CD8-positive, alpha-beta T cell (primary cell): ENCODE measurements at regions of chr1 and their contacts with region 1.

Region 1: GRCh38 chr1:99707535-99708142 is 58.8 kb downstream of the FRRS1 start:
- DNase-seq: peak in 8 of 9 experiments; percentile 12 to 58 (median 44)
- ATAC-seq: peak; percentile 58
- H3K4me3 ChIP-seq: no peak overlapping the region
- H3K4me3 Mint-ChIP-seq: no peak overlapping the region
- H3K27ac ChIP-seq: no peak overlapping the region
- H3K27ac Mint-ChIP-seq: no peak overlapping the region
- H3K4me1 ChIP-seq: peaks cover 3% of the 10 kb centered on the region
- H3K4me1 Mint-ChIP-seq: peaks cover 9% of the 10 kb centered on the region
- H3K27me3 ChIP-seq: no peaks in the 10 kb centered on the region
- H3K27me3 Mint-ChIP-seq: peaks cover 2% of the 10 kb centered on the region
- CTCF ChIP-seq: peak; percentile 77

Region 2: GRCh38 chr1:98749152-98749756 is 958.4 kb before region 1 on chr1:
- CTCF ChIA-PET with region 1: interaction called, 4 read pairs
- POLR2A ChIA-PET with region 1: no interaction called
- intact Hi-C with region 1: loop called (anchors 5 to 10 kb)
- DNase-seq: peak in 2 of 9 experiments; percentile 18 to 30
- ATAC-seq: no peak
- H3K4me3 ChIP-seq: no peak overlapping the region
- H3K4me3 Mint-ChIP-seq: no peak overlapping the region
- H3K27ac ChIP-seq: no peak overlapping the region
- H3K27ac Mint-ChIP-seq: no peak overlapping the region
- H3K4me1 ChIP-seq: no peaks in the 10 kb centered on the region
- H3K4me1 Mint-ChIP-seq: no peaks in the 10 kb centered on the region
- H3K27me3 ChIP-seq: no peaks in the 10 kb centered on the region
- H3K27me3 Mint-ChIP-seq: no peaks in the 10 kb centered on the region
- CTCF ChIP-seq: peak; percentile 46

Region 3: GRCh38 chr1:99180343-99180808 is 527.3 kb before region 1 on chr1:
- CTCF ChIA-PET with region 1: no interaction called
- POLR2A ChIA-PET with region 1: no interaction called
- intact Hi-C with region 1: loop called (anchors 5 kb)
- DNase-seq: peak; percentile 13 to 71 (median 53)
- ATAC-seq: peak; percentile 61
- H3K4me3 ChIP-seq: no peak overlapping the region
- H3K4me3 Mint-ChIP-seq: no peak overlapping the region
- H3K27ac ChIP-seq: no peak overlapping the region
- H3K27ac Mint-ChIP-seq: no peak overlapping the region
- H3K4me1 ChIP-seq: no peaks in the 10 kb centered on the region
- H3K4me1 Mint-ChIP-seq: no peaks in the 10 kb centered on the region
- H3K27me3 ChIP-seq: no peaks in the 10 kb centered on the region
- H3K27me3 Mint-ChIP-seq: peaks cover 4% of the 10 kb centered on the region
- CTCF ChIP-seq: peak; percentile 97

Region 4: GRCh38 chr1:99441299-99442095 is 266.1 kb before region 1 on chr1:
- CTCF ChIA-PET with region 1: no interaction called
- POLR2A ChIA-PET with region 1: no interaction called
- intact Hi-C with region 1: no loop called
- DNase-seq: no peak
- ATAC-seq: no peak
- H3K4me3 ChIP-seq: no peak overlapping the region
- H3K4me3 Mint-ChIP-seq: no peak overlapping the region
- H3K27ac ChIP-seq: no peak overlapping the region
- H3K27ac Mint-ChIP-seq: no peak overlapping the region
- H3K4me1 ChIP-seq: no peaks in the 10 kb centered on the region
- H3K4me1 Mint-ChIP-seq: no peaks in the 10 kb centered on the region
- H3K27me3 ChIP-seq: no peaks in the 10 kb centered on the region
- H3K27me3 Mint-ChIP-seq: no peaks in the 10 kb centered on the region
- CTCF ChIP-seq: no peak

Region 5: GRCh38 chr1:99728494-99729235 is 21.0 kb after region 1 on chr1:
- CTCF ChIA-PET with region 1: no interaction called
- POLR2A ChIA-PET with region 1: no interaction called
- intact Hi-C with region 1: no loop called
- DNase-seq: no peak
- ATAC-seq: no peak
- H3K4me3 ChIP-seq: no peak overlapping the region
- H3K4me3 Mint-ChIP-seq: no peak overlapping the region
- H3K27ac ChIP-seq: no peak overlapping the region
- H3K27ac Mint-ChIP-seq: no peak overlapping the region
- H3K4me1 ChIP-seq: no peaks in the 10 kb centered on the region
- H3K4me1 Mint-ChIP-seq: no peaks in the 10 kb centered on the region
- H3K27me3 ChIP-seq: no peaks in the 10 kb centered on the region
- H3K27me3 Mint-ChIP-seq: no peaks in the 10 kb centered on the region
- CTCF ChIP-seq: peak; percentile 42